ENCODE measurements at regions of chr20 and their contacts with region 1.

Region 1: GRCh38 chr20:58048169-58048568 is 180.3 kb downstream of the ANKRD60 start:
- DNase-seq: peak in 2 of 5 donors; percentile 28 to 51
- H3K4me3 ChIP-seq: no peak overlapping the region
- H3K27ac ChIP-seq: no peak overlapping the region
- H3K4me1 ChIP-seq: peaks cover 11% of the 10 kb centered on the region
- H3K27me3 ChIP-seq: no peaks in the 10 kb centered on the region
- CTCF ChIP-seq: no peak
- EP300 ChIP-seq: no peak
- POLR2A ChIP-seq: no peak

Region 2: DNA sequence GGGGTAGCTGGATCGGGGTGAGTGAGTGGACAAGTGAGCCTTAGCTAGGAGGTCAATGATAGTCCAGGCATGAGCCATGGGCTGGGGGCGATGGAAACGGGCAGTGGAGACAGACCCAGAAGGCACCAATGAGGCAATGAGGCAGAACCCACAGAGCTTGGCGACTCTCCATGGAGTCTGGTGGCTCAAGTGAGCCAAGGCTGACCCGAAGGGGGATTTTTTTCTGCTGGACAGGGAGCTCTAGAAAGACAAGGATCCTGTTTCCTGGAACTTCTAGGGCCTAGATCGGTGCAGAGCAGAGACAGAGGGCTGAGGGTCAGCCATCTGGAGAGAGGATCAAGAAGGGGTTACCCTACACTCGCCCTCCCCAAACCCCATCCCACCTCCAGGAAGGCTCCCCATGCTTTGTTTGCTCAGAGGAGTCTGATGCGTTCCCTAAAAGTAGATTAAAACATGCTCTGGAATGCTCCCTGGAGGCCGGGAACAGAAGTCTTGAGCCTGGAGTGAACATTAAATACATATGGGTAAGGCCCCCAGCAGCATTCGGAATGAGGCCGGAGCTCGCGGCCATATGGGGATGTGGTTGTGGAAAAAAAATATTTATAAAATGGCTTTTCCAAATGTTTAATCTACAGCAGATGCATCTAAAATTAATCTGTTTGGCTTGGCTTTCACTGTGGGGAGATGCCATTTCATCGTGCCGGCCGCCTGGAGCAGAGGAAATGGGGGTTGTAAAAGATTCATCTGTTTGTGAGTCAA is 100.6 kb before region 1 on chr20:
- intact Hi-C with region 1: no loop called
- DNase-seq: no peak
- H3K4me3 ChIP-seq: no peak overlapping the region
- H3K27ac ChIP-seq: no peak overlapping the region
- H3K4me1 ChIP-seq: no peaks in the 10 kb centered on the region
- H3K27me3 ChIP-seq: no peaks in the 10 kb centered on the region
- CTCF ChIP-seq: no peak
- EP300 ChIP-seq: no peak
- POLR2A ChIP-seq: no peak

Region 3: DNA sequence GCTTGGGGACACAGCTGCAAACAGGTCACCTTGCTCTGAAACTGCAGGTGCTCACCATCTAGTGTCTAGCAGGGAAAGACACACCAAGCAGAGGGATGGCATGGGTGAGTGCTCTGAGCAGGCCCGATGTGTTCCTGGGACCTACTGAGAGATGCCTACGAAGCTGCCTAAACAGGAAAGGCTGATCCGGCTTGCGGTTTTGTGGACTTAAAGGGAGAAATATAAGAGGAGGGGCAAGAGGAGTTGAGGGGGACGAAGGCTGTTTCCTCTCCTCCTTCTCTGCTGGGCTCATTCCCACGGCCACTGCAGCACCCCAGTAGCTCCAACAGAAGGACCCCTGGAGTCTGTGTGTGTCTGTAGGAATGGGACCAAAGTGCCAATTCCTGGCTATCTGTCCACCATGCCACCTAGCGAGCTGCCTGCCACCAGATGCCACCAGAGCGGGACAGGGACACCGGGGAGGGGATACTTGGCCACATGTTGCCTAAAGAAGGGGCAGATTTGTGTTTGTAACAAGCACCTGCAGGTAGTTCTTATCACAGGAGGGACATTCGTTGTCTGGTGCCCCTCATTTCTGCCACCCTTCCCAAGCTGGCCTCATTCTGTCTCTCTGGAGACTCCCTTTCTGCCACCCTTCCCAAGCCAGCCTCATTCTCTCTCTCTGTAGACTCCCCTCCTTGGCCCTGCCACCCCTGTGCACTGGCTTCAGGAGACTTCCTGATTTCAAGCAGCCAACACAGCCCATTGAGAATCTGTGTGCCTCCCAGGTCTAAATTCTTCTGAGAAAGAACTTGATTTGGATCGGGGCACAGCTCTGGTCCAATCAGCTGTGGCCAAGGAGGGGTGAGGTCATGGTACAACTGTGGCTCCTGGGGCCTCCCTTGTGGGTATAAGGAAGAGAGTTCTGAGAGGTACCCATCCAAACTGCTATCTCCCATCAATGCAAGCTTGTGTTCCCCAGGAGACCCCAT is 41.5 kb before region 1 on chr20:
- intact Hi-C with region 1: loop called in 2 of 4 experiments (anchors 5 kb)
- DNase-seq: no peak
- H3K4me3 ChIP-seq: no peak overlapping the region
- H3K27ac ChIP-seq: no peak overlapping the region
- H3K4me1 ChIP-seq: peaks cover 28% of the 10 kb centered on the region
- H3K27me3 ChIP-seq: no peaks in the 10 kb centered on the region
- CTCF ChIP-seq: no peak
- EP300 ChIP-seq: no peak
- POLR2A ChIP-seq: no peak

Region 4: DNA sequence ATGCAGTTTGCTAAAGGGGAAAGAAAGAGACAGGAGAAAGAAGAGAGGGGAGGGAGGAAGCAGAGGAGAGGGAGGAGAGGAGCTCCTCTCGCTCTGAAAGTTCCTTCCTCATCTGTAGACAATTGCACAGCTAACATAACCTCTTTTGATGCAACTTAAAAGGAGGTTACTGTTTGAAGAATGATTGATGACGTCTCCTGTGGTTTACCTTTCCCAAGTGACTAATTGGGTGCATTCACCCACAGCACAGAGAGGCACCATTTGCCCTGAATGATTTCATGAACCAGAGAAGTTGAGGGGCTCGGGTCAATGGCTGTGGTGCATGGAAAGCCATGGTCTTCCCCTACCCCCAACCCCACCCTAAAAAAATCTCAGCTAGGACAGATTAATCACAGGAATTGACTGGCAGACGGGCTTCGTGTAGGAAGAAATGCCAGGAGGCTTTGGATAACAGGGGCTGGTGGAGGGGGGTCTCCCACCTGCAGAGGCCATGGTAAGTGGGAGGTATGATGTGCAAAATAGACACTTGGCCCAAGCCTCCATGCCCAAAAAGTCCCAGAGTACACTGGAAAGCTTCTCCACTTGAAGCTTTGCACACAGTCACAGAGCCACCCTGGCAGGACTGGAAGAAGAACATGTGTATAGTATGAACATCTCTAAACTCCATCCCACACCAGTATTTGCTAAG is 33.4 kb before region 1 on chr20:
- intact Hi-C with region 1: loop called in 2 of 4 experiments (anchors 5 kb)
- DNase-seq: no peak
- H3K4me3 ChIP-seq: no peak overlapping the region
- H3K27ac ChIP-seq: no peak overlapping the region
- H3K4me1 ChIP-seq: peaks cover 16% of the 10 kb centered on the region
- H3K27me3 ChIP-seq: no peaks in the 10 kb centered on the region
- CTCF ChIP-seq: no peak
- EP300 ChIP-seq: no peak
- POLR2A ChIP-seq: no peak

Region 5: GRCh38 chr20:58760856-58761255 is 712.7 kb after region 1 on chr20:
- intact Hi-C with region 1: no loop called
- DNase-seq: no peak
- H3K4me3 ChIP-seq: no peak overlapping the region
- H3K27ac ChIP-seq: no peak overlapping the region
- H3K4me1 ChIP-seq: no peaks in the 10 kb centered on the region
- H3K27me3 ChIP-seq: no peaks in the 10 kb centered on the region
- CTCF ChIP-seq: no peak
- EP300 ChIP-seq: no peak
- POLR2A ChIP-seq: no peak